IMR-90 (cell line): ENCODE measurements at regions of chr1 and their contacts with region 1.

Region 1: GRCh38 chr1:117146570-117147346 is 25.2 kb upstream of the TRIM45 start:
- DNase-seq: peak; percentile 95
- ATAC-seq: peak; percentile 80
- H3K4me3 ChIP-seq: no peak overlapping the region
- H3K27ac ChIP-seq: peak overlapping the region; percentile 69
- H3K4me1 ChIP-seq: peaks cover 14% of the 10 kb centered on the region
- H3K27me3 ChIP-seq: no peaks in the 10 kb centered on the region
- CTCF ChIP-seq: no peak
- POLR2A ChIP-seq: no peak
- RAD21 ChIP-seq: no peak

Region 2: GRCh38 chr1:117367047-117368018 is 220.6 kb after region 1 on chr1 and contains the start of gene MAN1A2:
- CTCF ChIA-PET with region 1: no interaction called
- POLR2A ChIA-PET with region 1: no interaction called
- dilution Hi-C with region 1: no loop called
- in situ Hi-C with region 1: no loop called
- intact Hi-C with region 1: loop called (anchors 10 kb)
- DNase-seq: peak; percentile 69
- ATAC-seq: peak; percentile 83
- H3K4me3 ChIP-seq: peak within 1 kb of the TSS; percentile 90
- H3K27ac ChIP-seq: peak within 1 kb of the TSS; percentile 97
- H3K4me1 ChIP-seq: peaks cover 6% of the 10 kb centered on the region
- H3K27me3 ChIP-seq: no peaks in the 10 kb centered on the region
- CTCF ChIP-seq: no peak
- POLR2A ChIP-seq: no peak
- RAD21 ChIP-seq: no peak
- total RNA-seq, gene MAN1A2: 29.4 and 60.8 TPM in 2 replicates

Region 3: GRCh38 chr1:117427297-117427696 is 280.5 kb after region 1 on chr1:
- CTCF ChIA-PET with region 1: no interaction called
- POLR2A ChIA-PET with region 1: no interaction called
- dilution Hi-C with region 1: no loop called
- in situ Hi-C with region 1: no loop called
- intact Hi-C with region 1: no loop called
- DNase-seq: no peak
- ATAC-seq: no peak
- H3K4me3 ChIP-seq: no peak overlapping the region
- H3K27ac ChIP-seq: no peak overlapping the region
- H3K4me1 ChIP-seq: no peaks in the 10 kb centered on the region
- H3K27me3 ChIP-seq: no peaks in the 10 kb centered on the region
- CTCF ChIP-seq: no peak
- POLR2A ChIP-seq: no peak
- RAD21 ChIP-seq: no peak